ENCODE measurements at regions of chr3 and their contacts with region 1.

Region 1: GRCh38 chr3:195738274-195739044 is 17.7 kb downstream of the MUC20 start:
- DNase-seq: no peak
- CTCF ChIP-seq: no peak

Region 2: GRCh38 chr3:195727606-195728195 is 10.8 kb before region 1 on chr3:
- CTCF ChIA-PET with region 1: interaction called, 14 read pairs
- POLR2A ChIA-PET with region 1: no interaction called
- DNase-seq: no peak
- CTCF ChIP-seq: no peak

Measured in GM10248 (cell line).